ENCODE measurements at regions of chr19 and their contacts with region 1.

Region 1: GRCh38 chr19:44093931-44094765 is at the start of gene ZNF224:
- DNase-seq: peak; percentile 82
- ATAC-seq: peak; percentile 97
- H3K4me3 ChIP-seq: peak within 1 kb of the TSS; percentile 77 to 96
- H3K27ac ChIP-seq: peak within 1 kb of the TSS; percentile 45; the same call in 1 of the 2 replicates
- H3K4me1 ChIP-seq: peaks cover 4 to 9% of the 10 kb centered on the region in 2 experiments; a peak in 2 of 4 replicates
- H3K27me3 ChIP-seq: no peaks in the 10 kb centered on the region
- CTCF ChIP-seq: no peak
- POLR2A ChIP-seq: peak; percentile 39
- RAD21 ChIP-seq: no peak
- total RNA-seq, gene ZNF224: 15.1 TPM

Region 2: DNA sequence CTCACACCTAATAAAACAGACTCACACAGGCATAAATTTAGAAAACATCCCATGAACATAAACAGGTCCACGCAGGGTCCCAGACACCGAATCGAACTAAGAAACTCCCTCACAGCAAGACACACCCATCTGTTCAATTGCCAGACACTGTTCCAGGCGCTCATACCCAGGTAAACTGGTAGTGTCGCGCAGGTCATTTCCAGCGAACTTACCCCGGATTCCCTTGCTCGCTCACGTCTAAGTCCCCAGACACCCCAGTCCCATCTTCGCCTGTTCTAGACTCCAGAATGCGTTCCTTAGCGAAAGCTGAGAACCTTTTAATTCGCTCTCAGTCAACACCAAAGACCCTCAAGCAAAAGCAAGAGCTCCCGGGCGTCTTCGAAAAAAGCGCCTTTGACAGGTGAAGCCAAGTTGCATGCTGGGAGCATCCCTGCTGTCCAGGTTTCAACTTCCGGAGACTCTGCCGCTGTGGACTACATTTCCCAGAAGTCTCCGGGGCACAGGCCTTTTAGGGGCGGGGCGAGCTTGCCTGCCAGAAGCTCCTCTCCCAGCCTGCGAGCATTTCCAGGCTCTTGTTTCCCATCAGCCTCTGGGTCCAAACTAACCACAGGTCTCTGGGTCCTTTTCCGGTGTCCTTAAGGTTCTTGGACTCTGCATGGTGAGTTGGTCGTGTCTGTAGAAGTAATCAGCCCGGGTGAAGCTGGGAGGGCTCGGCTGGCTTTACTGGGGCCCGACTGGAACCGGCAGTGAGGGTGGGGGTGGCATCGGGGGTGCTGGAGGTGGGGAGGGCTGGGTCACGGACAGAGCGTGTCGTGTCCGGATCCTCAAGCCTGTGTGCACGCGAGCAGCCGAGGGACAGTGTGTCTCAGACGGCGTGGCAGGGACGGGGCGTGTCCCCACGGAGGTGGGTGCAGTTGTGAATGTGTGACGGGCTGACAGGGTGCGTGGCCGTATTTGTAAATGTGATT is 267.1 kb before region 1 on chr19 and contains the start of gene ZNF283:
- CTCF ChIA-PET with region 1: no interaction called
- POLR2A ChIA-PET with region 1: no interaction called
- RAD21 ChIA-PET with region 1: interaction called in 1 of 2 experiments, 3 read pairs
- intact Hi-C with region 1: loop called (anchors 10 kb)
- DNase-seq: peak; percentile 89
- ATAC-seq: peak; percentile 96
- H3K4me3 ChIP-seq: peak within 1 kb of the TSS; percentile 68 to 74
- H3K27ac ChIP-seq: no peak within 1 kb of the TSS
- H3K4me1 ChIP-seq: peaks cover 3 to 6% of the 10 kb centered on the region in 2 experiments; a peak in 1 of 4 replicates
- H3K27me3 ChIP-seq: no peaks in the 10 kb centered on the region
- CTCF ChIP-seq: no peak
- POLR2A ChIP-seq: no peak
- RAD21 ChIP-seq: 0 out of 2 replicates have a peak, but pooled peaks have one; percentile 2
- total RNA-seq, gene ZNF283: 7.6 TPM

Region 3: GRCh38 chr19:43950834-43951645 is 143.1 kb before region 1 on chr19 and contains the start of gene ZNF221:
- CTCF ChIA-PET with region 1: no interaction called
- POLR2A ChIA-PET with region 1: no interaction called
- RAD21 ChIA-PET with region 1: no interaction called
- intact Hi-C with region 1: loop called (anchors 5 kb)
- DNase-seq: peak; percentile 95
- ATAC-seq: peak; percentile 96
- H3K4me3 ChIP-seq: peak within 1 kb of the TSS; percentile 73 to 80
- H3K27ac ChIP-seq: peak within 1 kb of the TSS; percentile 56
- H3K4me1 ChIP-seq: peaks cover 2 to 4% of the 10 kb centered on the region in 2 experiments; a peak in 3 of 4 replicates
- H3K27me3 ChIP-seq: no peaks in the 10 kb centered on the region
- CTCF ChIP-seq: peak in 2 of 3 experiments; percentile 49 to 58; a peak in 4 of 6 replicates
- POLR2A ChIP-seq: no peak
- RAD21 ChIP-seq: peak; percentile 57
- total RNA-seq, gene ZNF221: 2.5 TPM

Region 4: DNA sequence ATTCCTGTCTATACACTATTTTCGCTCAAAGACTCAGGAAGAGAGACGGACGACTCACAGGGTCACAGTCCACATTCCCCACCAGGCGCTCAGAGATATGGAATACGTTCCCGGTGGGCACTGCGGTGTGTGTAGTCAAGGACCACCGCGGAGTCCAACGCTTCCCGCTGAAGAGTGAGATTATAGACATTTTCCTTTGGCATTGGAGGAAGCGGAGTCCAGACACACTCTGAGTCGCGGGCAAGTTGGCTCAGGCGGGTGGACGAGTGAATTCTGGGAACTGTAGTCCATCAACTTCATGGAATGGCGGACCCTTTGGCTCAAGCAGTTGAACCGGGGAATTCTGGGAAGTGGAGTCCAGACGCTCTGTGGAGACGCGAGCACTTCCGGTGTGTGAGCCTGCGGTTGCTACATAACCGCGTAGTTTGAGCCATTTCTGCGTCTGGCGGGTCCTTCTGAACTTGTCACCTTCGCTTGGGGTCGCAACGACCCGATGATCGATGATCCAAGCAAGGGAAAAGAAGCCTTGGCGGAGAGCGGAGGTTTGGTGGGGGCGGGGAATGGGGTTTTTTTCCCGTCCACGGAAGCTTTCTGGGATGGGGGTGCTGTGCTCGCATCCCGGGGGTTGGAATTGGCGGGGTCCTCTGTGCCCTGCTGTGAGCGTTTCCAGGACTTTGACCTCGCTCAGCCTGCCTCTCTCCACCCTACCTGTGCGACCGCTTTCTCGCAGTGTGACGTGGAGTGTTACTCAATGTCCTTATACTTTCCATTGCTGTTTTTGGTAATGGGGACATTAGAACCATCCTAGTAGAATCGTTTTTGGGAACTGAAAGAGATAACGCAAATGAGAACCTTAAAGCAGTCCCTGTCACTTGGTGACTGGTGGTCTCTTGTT is 91.3 kb before region 1 on chr19 and contains the start of gene ZNF230:
- CTCF ChIA-PET with region 1: no interaction called
- POLR2A ChIA-PET with region 1: no interaction called
- RAD21 ChIA-PET with region 1: no interaction called
- intact Hi-C with region 1: loop called (anchors 2 kb)
- DNase-seq: peak; percentile 92
- ATAC-seq: peak; percentile 95
- H3K4me3 ChIP-seq: peak within 1 kb of the TSS; percentile 86 to 88
- H3K27ac ChIP-seq: 0 out of 2 replicates have a peak within 1 kb of the TSS, but pooled peaks have one; percentile 0
- H3K4me1 ChIP-seq: peaks cover 0 to 13% of the 10 kb centered on the region in 2 experiments; a peak in 2 of 4 replicates
- H3K27me3 ChIP-seq: no peaks in the 10 kb centered on the region
- CTCF ChIP-seq: no peak
- POLR2A ChIP-seq: no peak
- RAD21 ChIP-seq: no peak
- total RNA-seq, gene ZNF230: 2.8 TPM

Region 5: DNA sequence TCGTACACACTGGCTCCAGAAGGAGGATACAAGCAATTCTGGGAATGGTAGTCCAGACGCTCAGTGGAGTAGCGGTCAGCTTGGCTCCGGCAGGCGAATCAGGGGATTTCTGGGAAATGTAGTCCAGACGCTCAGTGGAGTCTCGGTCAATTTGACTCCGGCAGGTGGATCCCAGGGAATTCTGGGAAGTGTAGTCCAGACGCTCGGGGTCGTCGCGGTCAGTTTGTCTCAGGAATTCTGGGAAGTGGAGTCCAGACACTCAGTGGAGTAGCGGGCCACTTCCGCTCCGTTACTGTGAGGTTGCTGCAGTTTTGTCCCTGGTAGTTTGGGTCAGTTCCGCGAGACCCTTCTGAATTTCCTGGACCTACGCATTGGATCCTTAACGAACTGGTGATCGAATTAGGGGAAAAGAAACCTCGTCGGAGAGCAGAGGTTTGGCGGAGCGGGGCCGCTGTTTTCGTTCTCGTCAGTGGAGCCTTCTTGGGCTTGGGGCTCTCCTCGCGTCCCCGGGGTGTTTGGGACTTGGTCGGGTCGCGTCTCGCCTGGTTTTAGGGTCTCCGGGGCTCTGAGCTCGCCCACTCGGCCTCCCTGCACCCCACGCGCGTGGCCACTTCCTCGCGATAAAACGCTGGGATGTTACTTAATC is 19.1 kb after region 1 on chr19 and contains the start of gene ZNF225:
- CTCF ChIA-PET with region 1: no interaction called
- POLR2A ChIA-PET with region 1: no interaction called
- RAD21 ChIA-PET with region 1: no interaction called
- intact Hi-C with region 1: loop called (anchors 2 kb)
- DNase-seq: peak; percentile 97
- ATAC-seq: peak; percentile 98
- H3K4me3 ChIP-seq: peak within 1 kb of the TSS; percentile 72 to 87
- H3K27ac ChIP-seq: peak within 1 kb of the TSS; percentile 34
- H3K4me1 ChIP-seq: peaks cover 2 to 10% of the 10 kb centered on the region in 2 experiments; a peak in 1 of 4 replicates
- H3K27me3 ChIP-seq: no peaks in the 10 kb centered on the region
- CTCF ChIP-seq: no peak
- POLR2A ChIP-seq: peak; percentile 63
- RAD21 ChIP-seq: peak; percentile 19; the same call in 1 of the 2 replicates
- total RNA-seq, gene ZNF225: 2.8 TPM

Region 6: GRCh38 chr19:44141191-44142058 is 47.3 kb after region 1 on chr19 and contains the start of gene ZNF234:
- CTCF ChIA-PET with region 1: no interaction called
- POLR2A ChIA-PET with region 1: no interaction called
- RAD21 ChIA-PET with region 1: no interaction called
- intact Hi-C with region 1: no loop called
- DNase-seq: peak; percentile 33
- ATAC-seq: peak; percentile 94
- H3K4me3 ChIP-seq: peak within 1 kb of the TSS; percentile 57 to 62
- H3K27ac ChIP-seq: peak within 1 kb of the TSS; percentile 33; the same call in 1 of the 2 replicates
- H3K4me1 ChIP-seq: peaks cover 0 to 9% of the 10 kb centered on the region in 2 experiments; a peak in 1 of 4 replicates
- H3K27me3 ChIP-seq: no peaks in the 10 kb centered on the region
- CTCF ChIP-seq: no peak
- POLR2A ChIP-seq: no peak
- RAD21 ChIP-seq: no peak
- total RNA-seq, gene ZNF234: 3.4 TPM

Region 7: DNA sequence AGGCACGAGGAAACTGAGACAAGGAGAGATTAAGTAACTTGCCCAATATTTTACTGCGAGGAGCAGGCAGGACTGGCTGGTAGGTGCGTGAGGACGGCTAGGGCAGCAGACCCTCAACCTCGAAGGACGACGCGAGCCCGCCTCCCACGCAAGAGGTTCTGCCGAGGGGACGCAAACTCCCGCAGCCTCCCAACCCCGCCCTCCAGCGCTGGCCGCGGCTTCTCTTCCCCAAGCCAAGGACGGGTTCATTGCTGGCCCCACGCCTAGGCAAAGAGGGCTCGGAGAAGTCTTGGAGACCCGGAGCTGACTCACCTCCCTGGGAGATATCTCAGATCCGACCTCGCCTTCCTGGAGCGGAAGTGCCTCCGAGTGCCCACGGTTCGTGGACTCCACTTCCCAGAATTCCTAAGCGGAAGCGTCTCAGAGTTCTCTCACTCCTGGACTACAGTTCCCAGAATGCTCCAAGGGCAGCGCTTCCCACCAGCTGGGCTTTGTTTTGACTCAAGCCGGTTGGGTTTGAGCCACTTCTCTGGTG is 210.6 kb after region 1 on chr19 and contains the start of gene ZNF235:
- CTCF ChIA-PET with region 1: no interaction called
- POLR2A ChIA-PET with region 1: no interaction called
- RAD21 ChIA-PET with region 1: no interaction called
- intact Hi-C with region 1: loop called (anchors 1 kb)
- DNase-seq: peak; percentile 89
- ATAC-seq: peak; percentile 99
- H3K4me3 ChIP-seq: peak within 1 kb of the TSS; percentile 76 to 86
- H3K27ac ChIP-seq: peak within 1 kb of the TSS; percentile 60
- H3K4me1 ChIP-seq: peaks cover 3 to 14% of the 10 kb centered on the region in 2 experiments; a peak in 3 of 4 replicates
- H3K27me3 ChIP-seq: no peaks in the 10 kb centered on the region
- CTCF ChIP-seq: no peak
- POLR2A ChIP-seq: no peak
- RAD21 ChIP-seq: no peak; the same call in 1 of the 2 replicates
- total RNA-seq, gene ZNF235: 5.7 TPM

Region 8: DNA sequence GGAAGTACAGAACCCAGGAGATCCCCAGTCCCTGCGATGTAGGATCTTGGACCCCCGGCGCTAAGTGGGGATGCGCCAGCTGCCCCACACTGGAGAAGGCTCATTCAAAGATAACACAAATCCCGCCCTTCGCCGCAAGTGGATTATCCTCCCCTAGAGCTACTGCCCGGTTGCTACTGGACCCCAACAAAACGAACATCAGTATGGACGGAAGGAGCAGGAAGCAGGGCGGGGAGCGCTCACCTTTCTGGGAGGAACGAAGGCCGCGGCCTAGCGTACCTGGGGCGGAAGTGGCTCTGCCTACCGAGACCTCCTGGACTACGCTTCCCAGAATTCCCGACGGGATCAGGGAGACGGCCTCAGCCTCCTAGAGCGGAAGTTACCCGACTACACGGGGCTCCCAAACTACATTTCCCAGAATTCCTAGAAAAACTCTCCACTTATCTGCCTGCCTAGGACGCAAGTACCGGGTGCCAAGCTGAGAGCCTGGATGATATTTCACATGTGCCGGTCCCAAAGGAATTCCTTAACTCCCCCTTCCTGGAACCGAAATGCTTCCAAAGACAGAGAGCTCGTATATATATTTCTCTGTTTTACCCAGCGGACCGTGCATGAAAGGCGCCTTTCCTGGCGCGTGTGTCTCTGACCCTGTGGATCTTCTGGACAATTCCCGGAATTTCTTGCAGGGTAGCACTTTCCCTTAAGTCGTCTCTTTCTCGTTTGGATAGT is 262.4 kb after region 1 on chr19 and contains the start of gene ZNF112:
- CTCF ChIA-PET with region 1: no interaction called
- POLR2A ChIA-PET with region 1: no interaction called
- RAD21 ChIA-PET with region 1: no interaction called
- intact Hi-C with region 1: loop called (anchors 10 kb)
- DNase-seq: peak; percentile 90
- ATAC-seq: peak; percentile 100
- H3K4me3 ChIP-seq: peak within 1 kb of the TSS; percentile 70 to 80
- H3K27ac ChIP-seq: no peak within 1 kb of the TSS
- H3K4me1 ChIP-seq: peaks cover 0 to 3% of the 10 kb centered on the region in 2 experiments; a peak in 2 of 4 replicates
- H3K27me3 ChIP-seq: no peaks in the 10 kb centered on the region
- CTCF ChIP-seq: no peak
- POLR2A ChIP-seq: peak; percentile 46
- RAD21 ChIP-seq: no peak
- total RNA-seq, gene ZNF112: 3.6 TPM